Mammary epithelial cell (primary cell): ENCODE measurements at regions of chr15 and their contacts with region 1.

Region 1: GRCh38 chr15:51888593-51889195 is 59.2 kb downstream of the TMOD3 start:
- DNase-seq: no peak
- H3K4me3 ChIP-seq: no peak overlapping the region
- H3K27ac ChIP-seq: no peak overlapping the region
- H3K4me1 ChIP-seq: peaks cover 5% of the 10 kb centered on the region
- H3K27me3 ChIP-seq: no peaks in the 10 kb centered on the region
- CTCF ChIP-seq: peak; percentile 67 to 74

Region 2: GRCh38 chr15:51649659-51650521 is 238.8 kb before region 1 on chr15:
- CTCF ChIA-PET with region 1: no interaction called
- dilution Hi-C with region 1: no loop called
- in situ Hi-C with region 1: loop called in 1 of 2 experiments (anchors 10 kb)
- intact Hi-C with region 1: no loop called
- DNase-seq: peak; percentile 59
- H3K4me3 ChIP-seq: no peak overlapping the region
- H3K27ac ChIP-seq: no peak overlapping the region
- H3K4me1 ChIP-seq: peaks cover 4% of the 10 kb centered on the region
- H3K27me3 ChIP-seq: no peaks in the 10 kb centered on the region
- CTCF ChIP-seq: peak; percentile 68 to 82